Endothelial cell of umbilical vein (primary cell): ENCODE measurements at regions of chr17 and their contacts with region 1.

Region 1: DNA sequence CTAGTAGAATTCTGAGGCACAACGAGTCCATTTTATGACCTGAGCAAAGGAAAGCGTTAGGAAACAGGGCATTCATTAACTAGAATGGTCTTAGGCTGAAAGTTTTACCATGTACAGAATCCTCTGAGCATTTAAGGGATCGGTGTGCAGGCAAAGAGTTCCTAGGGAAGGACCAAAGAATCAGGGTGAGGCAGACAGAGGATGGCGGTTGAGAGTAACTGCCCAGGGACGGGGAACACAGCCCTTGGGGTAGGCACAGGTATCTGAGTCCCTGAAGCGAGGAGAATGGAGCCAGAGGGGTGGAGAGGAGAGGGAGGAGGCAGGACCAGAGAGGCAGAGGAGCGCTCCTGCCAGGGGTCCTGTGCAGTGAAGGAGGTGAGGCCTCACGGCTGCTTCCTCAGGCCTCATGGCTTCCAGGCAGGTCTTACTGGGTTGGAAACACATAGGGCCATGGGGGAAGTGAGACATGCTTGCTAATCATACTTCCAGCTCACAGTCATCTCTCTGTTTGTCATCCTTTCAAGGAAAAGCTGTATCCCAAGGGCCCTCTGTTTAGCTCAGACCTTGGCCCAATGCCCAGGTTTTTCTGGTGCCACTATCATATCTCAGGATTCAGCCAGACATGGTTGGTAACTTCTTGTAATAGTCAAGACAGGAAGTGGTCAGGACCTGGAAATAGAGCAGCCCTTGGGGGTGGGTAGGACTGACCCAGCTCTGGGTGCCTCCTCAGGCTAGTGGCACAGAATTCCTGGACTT is 13.8 kb upstream of the ITGB3 start:
- DNase-seq: peak; percentile 99
- H3K4me3 ChIP-seq: no peak overlapping the region
- H3K27ac ChIP-seq: peak overlapping the region; percentile 100
- H3K4me1 ChIP-seq: peaks cover 24% of the 10 kb centered on the region
- H3K27me3 ChIP-seq: no peaks in the 10 kb centered on the region
- CTCF ChIP-seq: no peak
- POLR2A ChIP-seq: peak; percentile 80

Region 2: DNA sequence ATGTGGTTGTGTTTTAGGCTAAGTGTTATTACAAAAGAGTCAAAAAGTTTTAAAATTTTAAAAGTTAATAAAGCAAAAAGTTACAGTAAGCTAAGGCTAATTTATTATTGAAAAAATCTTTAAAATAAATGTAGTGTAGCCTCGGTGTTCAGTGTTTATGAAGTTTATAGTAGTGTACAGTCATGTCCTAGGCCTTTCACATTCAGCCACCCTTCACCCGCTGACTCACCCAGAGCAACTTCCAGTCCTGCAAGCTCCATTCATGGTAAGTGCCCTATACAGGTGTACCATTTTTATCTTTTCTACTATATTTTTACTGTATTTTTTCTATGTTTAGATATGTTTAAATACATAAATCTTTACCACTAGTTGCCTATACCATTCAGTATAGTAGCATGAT is 162.2 kb before region 1 on chr17:
- CTCF ChIA-PET with region 1: no interaction called
- POLR2A ChIA-PET with region 1: no interaction called
- dilution Hi-C with region 1: no loop called
- intact Hi-C with region 1: no loop called
- DNase-seq: no peak
- H3K4me3 ChIP-seq: no peak overlapping the region
- H3K27ac ChIP-seq: no peak overlapping the region
- H3K4me1 ChIP-seq: no peaks in the 10 kb centered on the region
- H3K27me3 ChIP-seq: no peaks in the 10 kb centered on the region
- CTCF ChIP-seq: no peak
- POLR2A ChIP-seq: no peak

Region 3: DNA sequence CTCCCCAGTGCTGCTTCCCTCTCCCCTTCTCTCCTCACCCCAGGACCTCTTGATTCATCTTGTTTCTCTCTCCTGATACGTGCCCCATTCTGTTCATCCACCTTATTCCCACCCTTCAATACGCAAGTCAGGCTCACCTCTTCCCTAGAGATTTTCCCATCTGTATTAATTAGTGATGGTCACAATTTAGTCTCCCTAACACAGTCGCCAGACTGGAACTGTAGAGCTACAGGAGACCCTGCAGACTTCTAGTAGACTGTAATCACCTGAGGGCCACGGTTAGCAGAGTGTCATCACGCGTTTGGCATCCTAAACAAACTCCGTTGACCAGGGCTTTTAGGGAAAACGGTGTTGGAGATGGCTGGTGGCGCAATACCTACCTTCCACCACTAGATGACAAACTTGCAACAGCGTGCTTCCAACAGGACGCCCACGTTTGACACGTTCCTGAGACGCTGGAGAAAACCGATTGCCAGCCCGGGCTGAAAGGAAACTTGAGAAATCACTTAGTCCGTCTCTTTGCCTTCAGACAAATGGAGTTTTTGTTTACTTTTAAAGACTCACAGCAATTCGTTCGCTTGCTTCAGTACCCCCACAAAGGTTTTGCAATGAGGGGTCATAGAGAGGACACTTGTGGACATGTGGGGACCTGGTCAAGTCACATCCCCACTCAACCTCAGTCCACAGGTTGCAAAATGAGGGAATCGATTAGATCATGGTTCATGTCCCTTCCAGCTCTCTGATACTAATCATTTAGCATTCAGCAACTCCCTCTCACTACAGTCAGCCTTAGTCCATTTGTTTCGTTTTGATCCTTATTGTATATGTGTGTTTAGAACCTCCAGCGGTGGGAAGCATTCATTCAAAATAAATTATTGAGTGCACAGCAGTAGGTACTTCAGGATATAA is 10.0 kb before region 1 on chr17:
- CTCF ChIA-PET with region 1: interaction called, 16 read pairs
- POLR2A ChIA-PET with region 1: interaction called, 5 read pairs
- dilution Hi-C with region 1: no loop called
- intact Hi-C with region 1: loop called (anchors 1 kb)
- DNase-seq: peak; percentile 93
- H3K4me3 ChIP-seq: no peak overlapping the region
- H3K27ac ChIP-seq: peak overlapping the region; percentile 38
- H3K4me1 ChIP-seq: peaks cover 30% of the 10 kb centered on the region
- H3K27me3 ChIP-seq: no peaks in the 10 kb centered on the region
- CTCF ChIP-seq: peak; percentile 98 to 99
- POLR2A ChIP-seq: peak; percentile 55

Region 4: GRCh38 chr17:47253541-47254402 is 14.0 kb after region 1 on chr17 and contains the start of gene ITGB3:
- CTCF ChIA-PET with region 1: interaction called, 7 read pairs
- POLR2A ChIA-PET with region 1: interaction called, 5 read pairs
- dilution Hi-C with region 1: no loop called
- intact Hi-C with region 1: loop called (anchors 1 kb)
- DNase-seq: peak; percentile 83
- H3K4me3 ChIP-seq: peak within 1 kb of the TSS; percentile 61 to 87 (median 68)
- H3K27ac ChIP-seq: peak within 1 kb of the TSS; percentile 37
- H3K4me1 ChIP-seq: peaks cover 38% of the 10 kb centered on the region
- H3K27me3 ChIP-seq: no peaks in the 10 kb centered on the region
- CTCF ChIP-seq: peak; percentile 55 to 66
- POLR2A ChIP-seq: peak; percentile 60
- total RNA-seq, gene ITGB3: 49.9 and 60.0 TPM in 2 replicates

Region 5: GRCh38 chr17:47279062-47279736 is 39.4 kb after region 1 on chr17:
- CTCF ChIA-PET with region 1: interaction called, 3 read pairs
- POLR2A ChIA-PET with region 1: no interaction called
- dilution Hi-C with region 1: no loop called
- intact Hi-C with region 1: loop called (anchors 1 kb)
- DNase-seq: peak; percentile 76
- H3K4me3 ChIP-seq: no peak overlapping the region
- H3K27ac ChIP-seq: peak overlapping the region; percentile 68
- H3K4me1 ChIP-seq: peaks cover 21% of the 10 kb centered on the region
- H3K27me3 ChIP-seq: no peaks in the 10 kb centered on the region
- CTCF ChIP-seq: no peak
- POLR2A ChIP-seq: no peak

Region 6: GRCh38 chr17:47295062-47295845 is 55.5 kb after region 1 on chr17:
- CTCF ChIA-PET with region 1: interaction called, 4 read pairs
- POLR2A ChIA-PET with region 1: no interaction called
- dilution Hi-C with region 1: no loop called
- intact Hi-C with region 1: loop called (anchors 1 kb)
- DNase-seq: no peak
- H3K4me3 ChIP-seq: no peak overlapping the region
- H3K27ac ChIP-seq: peak overlapping the region; percentile 75
- H3K4me1 ChIP-seq: peaks cover 15% of the 10 kb centered on the region
- H3K27me3 ChIP-seq: no peaks in the 10 kb centered on the region
- CTCF ChIP-seq: no peak
- POLR2A ChIP-seq: no peak

Region 7: DNA sequence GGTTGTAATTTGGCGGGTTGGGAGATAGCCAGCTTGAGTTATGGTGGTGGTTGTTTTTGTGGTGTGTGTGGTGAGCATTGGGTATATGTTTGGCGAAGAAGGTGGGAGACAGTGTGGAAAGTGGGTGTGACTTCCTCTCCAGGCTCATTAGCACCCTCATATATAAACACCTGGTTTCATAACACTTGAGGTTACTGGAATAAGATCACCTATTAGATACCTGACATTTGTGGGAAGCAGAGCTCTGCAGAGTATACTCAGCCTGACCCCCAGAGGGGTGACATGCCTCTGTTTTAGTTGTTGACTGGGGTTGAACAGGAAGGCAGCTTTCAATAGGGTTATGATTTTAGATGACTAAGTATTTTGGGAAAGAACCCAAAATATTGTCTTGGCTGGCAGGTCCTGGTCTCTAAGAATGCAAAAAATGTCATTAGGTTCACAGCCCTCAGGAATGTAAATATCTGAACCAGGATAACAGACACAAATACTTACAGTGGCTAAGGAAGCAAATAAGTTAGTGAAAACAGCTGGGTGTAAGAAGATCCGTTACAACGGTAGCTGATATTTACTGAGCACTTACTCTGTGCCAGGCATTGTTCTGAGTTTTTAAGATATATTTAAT is 65.6 kb after region 1 on chr17:
- CTCF ChIA-PET with region 1: interaction called, 10 read pairs
- POLR2A ChIA-PET with region 1: interaction called, 7 read pairs
- dilution Hi-C with region 1: no loop called
- intact Hi-C with region 1: loop called (anchors 1 kb)
- DNase-seq: peak; percentile 98
- H3K4me3 ChIP-seq: peak overlapping the region in 1 of 3 experiments; percentile 1
- H3K27ac ChIP-seq: peak overlapping the region; percentile 93
- H3K4me1 ChIP-seq: peaks cover 22% of the 10 kb centered on the region
- H3K27me3 ChIP-seq: no peaks in the 10 kb centered on the region
- CTCF ChIP-seq: no peak
- POLR2A ChIP-seq: no peak